IMR-90 (cell line): ENCODE measurements at regions of chr7 and their contacts with region 1.

Region 1: DNA sequence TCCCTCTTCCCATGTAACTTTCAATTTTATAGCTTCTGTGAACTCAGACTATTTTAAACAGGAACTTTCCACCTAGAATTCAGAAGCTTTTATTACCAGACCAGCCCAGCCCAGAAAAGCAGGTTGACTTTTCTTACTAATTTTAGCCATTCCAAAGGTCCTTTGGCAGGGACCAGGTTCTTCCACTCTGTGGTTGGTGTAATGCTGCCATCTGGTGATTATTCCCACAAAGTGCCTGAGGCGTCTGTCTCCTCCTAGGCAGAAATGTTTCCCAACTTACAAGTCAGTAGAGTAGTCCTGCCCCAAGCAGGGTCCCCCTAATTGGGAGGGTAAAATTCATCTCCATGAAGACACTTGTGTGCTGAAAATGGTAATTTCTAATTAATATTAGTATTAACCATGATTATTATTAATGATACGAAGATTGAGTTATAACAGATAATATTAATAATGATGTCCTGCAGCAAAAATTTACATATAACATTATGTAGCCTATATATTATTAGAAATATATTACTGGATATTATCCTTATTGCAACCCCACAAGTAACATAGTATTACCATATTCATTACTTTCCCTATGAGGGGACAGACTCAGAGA is 53.0 kb upstream of the PPP1R17 start:
- DNase-seq: peak; percentile 39
- ATAC-seq: peak; percentile 77
- H3K4me3 ChIP-seq: no peak overlapping the region
- H3K27ac ChIP-seq: no peak overlapping the region
- H3K4me1 ChIP-seq: no peaks in the 10 kb centered on the region
- H3K27me3 ChIP-seq: no peaks in the 10 kb centered on the region
- CTCF ChIP-seq: peak; percentile 54
- POLR2A ChIP-seq: no peak
- RAD21 ChIP-seq: peak; percentile 58

Region 2: DNA sequence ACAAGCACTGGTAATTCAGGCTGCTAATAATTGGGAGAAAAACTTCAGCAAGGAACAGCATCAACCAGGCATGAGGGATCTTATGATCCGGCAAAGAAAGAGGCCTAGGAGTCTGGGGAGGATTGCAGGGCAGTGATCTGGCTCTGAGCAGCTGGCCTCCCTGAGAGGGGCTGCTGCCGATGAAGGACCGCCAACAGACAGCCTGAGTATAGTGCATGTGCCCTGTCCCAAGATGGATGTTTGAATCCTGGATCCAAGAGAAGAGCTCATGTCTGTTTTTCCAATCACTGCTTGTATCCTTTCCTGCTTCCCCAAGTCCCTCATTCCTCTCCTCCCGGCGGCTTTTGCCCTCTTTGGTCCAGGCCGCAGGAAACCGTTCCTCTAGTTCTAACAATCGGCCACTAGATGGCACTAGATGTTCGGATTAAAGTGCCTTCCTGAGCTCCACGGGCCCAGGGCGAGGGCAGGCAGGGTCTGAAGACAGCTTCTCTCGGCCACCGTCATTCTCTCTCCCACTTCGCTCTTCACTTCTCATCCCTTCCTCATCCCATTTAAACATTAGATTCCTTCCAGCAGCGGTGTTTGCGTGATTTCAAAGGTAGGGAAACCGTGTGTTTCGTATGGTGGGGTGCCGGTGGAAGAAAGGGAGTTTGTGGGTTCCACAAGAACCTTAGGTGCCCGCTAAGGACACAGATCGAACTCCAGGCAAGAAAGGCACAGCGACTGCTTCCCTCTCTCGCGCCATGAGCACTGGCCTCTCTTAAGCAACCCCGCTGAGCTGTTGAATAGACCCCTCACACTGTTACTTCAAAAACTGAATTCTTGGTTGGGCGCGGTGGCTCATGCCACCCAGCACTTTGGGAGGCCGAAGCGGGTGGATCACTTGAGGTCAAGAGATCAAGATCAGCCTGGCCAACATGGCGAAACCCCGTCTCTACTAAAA is 499.5 kb before region 1 on chr7:
- CTCF ChIA-PET with region 1: interaction called, 3 read pairs
- POLR2A ChIA-PET with region 1: no interaction called
- dilution Hi-C with region 1: no loop called
- in situ Hi-C with region 1: no loop called
- intact Hi-C with region 1: loop called (anchors 1 kb)
- DNase-seq: peak; percentile 54
- ATAC-seq: peak; percentile 100
- H3K4me3 ChIP-seq: no peak overlapping the region
- H3K27ac ChIP-seq: no peak overlapping the region
- H3K4me1 ChIP-seq: no peaks in the 10 kb centered on the region
- H3K27me3 ChIP-seq: no peaks in the 10 kb centered on the region; the same call in 1 of the 2 replicates
- CTCF ChIP-seq: peak; percentile 68
- POLR2A ChIP-seq: no peak
- RAD21 ChIP-seq: peak; percentile 62

Region 3: DNA sequence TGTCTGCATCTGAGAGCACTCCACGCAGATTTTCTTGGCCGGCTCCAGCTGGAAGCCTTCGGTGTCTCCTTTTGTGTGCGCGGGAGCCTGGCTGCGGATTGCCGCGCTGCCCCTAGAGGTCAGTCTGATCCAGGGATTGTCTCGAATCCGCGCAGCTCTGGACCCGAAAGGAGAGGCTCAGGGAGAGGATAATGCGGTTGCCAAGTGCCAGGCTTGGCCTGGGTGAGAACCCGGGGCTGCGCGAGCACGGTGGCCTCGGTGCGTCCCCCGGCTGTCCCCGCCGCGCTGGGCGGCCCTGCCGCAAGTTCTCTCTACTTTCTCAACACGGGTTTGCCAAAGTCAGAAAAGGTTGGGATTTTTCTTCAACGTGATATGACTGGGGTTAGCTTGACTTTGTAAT is 441.0 kb before region 1 on chr7:
- CTCF ChIA-PET with region 1: no interaction called
- POLR2A ChIA-PET with region 1: no interaction called
- dilution Hi-C with region 1: no loop called
- in situ Hi-C with region 1: no loop called
- intact Hi-C with region 1: loop called (anchors 1 kb)
- DNase-seq: peak; percentile 16
- ATAC-seq: peak; percentile 99
- H3K4me3 ChIP-seq: no peak overlapping the region
- H3K27ac ChIP-seq: no peak overlapping the region
- H3K4me1 ChIP-seq: no peaks in the 10 kb centered on the region
- H3K27me3 ChIP-seq: no peaks in the 10 kb centered on the region
- CTCF ChIP-seq: peak; percentile 50
- POLR2A ChIP-seq: no peak
- RAD21 ChIP-seq: peak; percentile 48

Region 4: GRCh38 chr7:31443457-31443856 is 190.5 kb before region 1 on chr7:
- CTCF ChIA-PET with region 1: no interaction called
- POLR2A ChIA-PET with region 1: no interaction called
- dilution Hi-C with region 1: no loop called
- in situ Hi-C with region 1: no loop called
- intact Hi-C with region 1: loop called (anchors 1 kb)
- DNase-seq: peak; percentile 45
- ATAC-seq: peak; percentile 81
- H3K4me3 ChIP-seq: no peak overlapping the region
- H3K27ac ChIP-seq: no peak overlapping the region
- H3K4me1 ChIP-seq: no peaks in the 10 kb centered on the region
- H3K27me3 ChIP-seq: no peaks in the 10 kb centered on the region
- CTCF ChIP-seq: peak; percentile 67
- POLR2A ChIP-seq: no peak
- RAD21 ChIP-seq: peak; percentile 58

Region 5: GRCh38 chr7:32142649-32143048 is 508.7 kb after region 1 on chr7:
- CTCF ChIA-PET with region 1: no interaction called
- POLR2A ChIA-PET with region 1: no interaction called
- dilution Hi-C with region 1: no loop called
- in situ Hi-C with region 1: no loop called
- intact Hi-C with region 1: no loop called
- DNase-seq: peak; percentile 80
- ATAC-seq: peak; percentile 89
- H3K4me3 ChIP-seq: no peak overlapping the region
- H3K27ac ChIP-seq: peak overlapping the region; percentile 65
- H3K4me1 ChIP-seq: peaks cover 7% of the 10 kb centered on the region
- H3K27me3 ChIP-seq: no peaks in the 10 kb centered on the region
- CTCF ChIP-seq: no peak
- POLR2A ChIP-seq: no peak
- RAD21 ChIP-seq: no peak